Naive thymus-derived CD4-positive, alpha-beta T cell (primary cell): ENCODE measurements at regions of chr12 and their contacts with region 1.

Region 1: DNA sequence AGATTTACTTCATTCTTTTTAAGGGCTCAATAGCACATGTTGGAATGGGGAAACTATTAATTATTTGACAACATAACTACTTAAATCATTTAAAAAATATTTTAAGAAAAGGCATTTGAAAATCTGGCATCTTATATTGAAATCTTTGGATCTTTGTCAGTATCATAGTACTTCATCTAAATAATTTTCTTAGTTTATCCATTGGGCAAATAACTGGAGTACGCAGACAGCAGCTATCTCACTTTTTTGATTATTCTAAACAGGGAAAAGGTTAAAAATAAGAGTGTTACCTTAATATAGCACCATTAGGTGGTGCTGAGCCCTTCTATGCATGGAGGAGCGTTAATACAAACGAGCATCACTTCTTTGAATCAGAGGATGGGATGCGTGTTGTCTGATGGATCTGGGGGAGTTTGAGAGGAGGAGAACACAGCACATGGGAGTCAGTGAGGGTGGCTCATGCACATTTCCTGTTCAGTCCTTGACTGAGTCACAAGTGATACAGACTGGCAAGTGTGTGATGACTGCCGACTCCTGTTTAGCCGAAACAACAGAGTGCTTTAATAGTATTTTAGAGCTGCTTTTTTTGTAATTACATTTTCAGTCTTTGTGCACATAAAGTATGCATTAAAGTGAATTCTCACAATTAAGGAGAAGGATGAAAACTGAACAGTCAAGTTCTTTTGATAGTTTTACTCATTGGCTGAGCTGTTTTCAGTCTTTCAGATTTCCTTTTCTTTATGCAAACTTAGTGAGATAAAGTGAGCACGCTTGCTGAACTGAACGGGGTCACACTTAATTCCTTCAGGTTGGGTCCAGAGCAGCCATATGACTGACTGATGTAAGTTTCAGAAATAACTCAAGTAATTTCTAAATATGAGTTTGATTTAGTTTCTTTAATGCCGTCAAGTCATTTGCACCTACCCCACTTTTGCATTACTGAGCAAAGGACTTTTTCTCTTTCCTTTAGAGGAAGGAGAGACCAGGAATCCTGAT is 92.7 kb downstream of the DIP2B start:
- DNase-seq: peak in 8 of 9 donors; percentile 8 to 55 (median 33)
- ATAC-seq: peak; percentile 88
- H3K4me3 ChIP-seq: no peak overlapping the region
- H3K4me3 Mint-ChIP-seq: peak overlapping the region in 9 of 10 donors; percentile 26 to 76 (median 62)
- H3K27ac ChIP-seq: peak overlapping the region; percentile 36
- H3K27ac Mint-ChIP-seq: peak overlapping the region in 8 of 9 donors; percentile 16 to 80 (median 58)
- H3K4me1 ChIP-seq: peaks cover 0 to 7% of the 10 kb centered on the region in 2 donors
- H3K4me1 Mint-ChIP-seq: peaks cover 38 to 76% (median 58%) of the 10 kb centered on the region in 7 donors
- H3K27me3 ChIP-seq: no peaks in the 10 kb centered on the region
- H3K27me3 Mint-ChIP-seq: no peaks in the 10 kb centered on the region

Region 2: DNA sequence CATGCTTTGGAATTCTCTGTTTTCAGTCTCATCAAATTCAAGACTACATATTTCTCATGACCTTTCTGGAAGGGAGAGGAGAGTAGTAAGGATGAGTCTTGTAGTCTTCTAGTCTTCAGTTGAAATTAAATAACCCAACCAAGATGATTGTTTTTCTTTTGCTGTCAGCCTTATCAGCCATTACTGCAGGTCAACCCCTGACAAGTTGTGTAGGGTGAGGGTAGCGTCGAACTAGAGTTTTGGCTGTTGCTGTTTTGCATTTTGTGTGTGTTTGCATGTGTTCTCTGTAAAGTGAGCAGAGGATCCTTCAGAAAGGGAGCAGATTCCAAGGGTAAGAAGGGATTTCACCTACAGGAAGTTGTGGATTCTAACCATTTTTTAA is 64.3 kb before region 1 on chr12:
- CTCF ChIA-PET with region 1: no interaction called
- POLR2A ChIA-PET with region 1: no interaction called
- intact Hi-C with region 1: loop called in 1 of 2 experiments (anchors 5 kb)
- DNase-seq: no peak
- ATAC-seq: peak; percentile 6
- H3K4me3 ChIP-seq: no peak overlapping the region
- H3K4me3 Mint-ChIP-seq: no peak overlapping the region
- H3K27ac ChIP-seq: peak overlapping the region; percentile 50
- H3K27ac Mint-ChIP-seq: no peak overlapping the region
- H3K4me1 ChIP-seq: peaks cover 11 to 46% of the 10 kb centered on the region in 2 donors
- H3K4me1 Mint-ChIP-seq: peaks cover 23 to 39% (median 34%) of the 10 kb centered on the region in 7 donors
- H3K27me3 ChIP-seq: no peaks in the 10 kb centered on the region
- H3K27me3 Mint-ChIP-seq: no peaks in the 10 kb centered on the region

Region 3: DNA sequence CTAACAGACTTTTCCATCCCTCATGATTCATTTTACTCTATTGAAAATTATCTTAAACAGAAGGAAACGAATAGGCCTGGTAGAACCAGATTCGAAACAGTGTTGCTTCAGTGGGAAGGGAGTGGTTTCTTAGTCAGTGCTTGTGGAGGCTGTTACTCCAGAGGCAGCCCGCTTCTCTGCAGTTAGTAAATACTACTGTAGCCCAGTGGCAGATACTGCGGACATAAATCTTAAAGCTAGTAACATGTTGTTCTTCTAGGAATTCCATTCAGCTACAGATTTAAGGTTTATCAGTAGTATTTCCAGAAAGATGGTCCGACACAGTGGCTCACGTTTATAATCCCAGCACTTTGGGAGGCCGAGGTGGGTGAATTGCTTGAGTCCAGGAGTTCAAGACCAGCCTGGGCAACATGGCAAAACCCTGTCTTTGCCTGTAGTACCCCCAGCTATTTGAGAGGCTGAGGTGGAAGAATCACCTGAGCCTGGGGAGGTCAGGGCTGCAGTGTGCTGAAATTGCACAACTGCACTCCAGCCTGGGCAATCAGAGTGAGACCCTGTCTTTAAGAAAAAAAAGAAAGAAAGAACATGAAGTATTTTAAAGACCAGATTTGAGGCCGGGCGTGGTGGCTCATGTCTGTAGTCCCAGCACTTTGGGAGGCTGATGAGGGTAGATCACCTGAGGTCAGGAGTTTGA is 46.8 kb before region 1 on chr12:
- CTCF ChIA-PET with region 1: no interaction called
- POLR2A ChIA-PET with region 1: no interaction called
- intact Hi-C with region 1: loop called in 1 of 2 experiments (anchors 5 kb)
- DNase-seq: no peak
- ATAC-seq: no peak
- H3K4me3 ChIP-seq: no peak overlapping the region
- H3K4me3 Mint-ChIP-seq: no peak overlapping the region
- H3K27ac ChIP-seq: no peak overlapping the region
- H3K27ac Mint-ChIP-seq: peak overlapping the region in 1 of 9 donors; percentile 25
- H3K4me1 ChIP-seq: peaks cover 0 to 4% of the 10 kb centered on the region in 2 donors
- H3K4me1 Mint-ChIP-seq: peaks cover 19 to 70% (median 57%) of the 10 kb centered on the region in 7 donors
- H3K27me3 ChIP-seq: no peaks in the 10 kb centered on the region
- H3K27me3 Mint-ChIP-seq: no peaks in the 10 kb centered on the region

Region 4: GRCh38 chr12:50581201-50582184 is 16.0 kb before region 1 on chr12:
- CTCF ChIA-PET with region 1: interaction called, 4 read pairs
- POLR2A ChIA-PET with region 1: interaction called, 4 read pairs
- intact Hi-C with region 1: loop called in 1 of 2 experiments (anchors 2 kb)
- DNase-seq: no peak
- ATAC-seq: peak; percentile 12
- H3K4me3 ChIP-seq: no peak overlapping the region
- H3K4me3 Mint-ChIP-seq: peak overlapping the region in 1 of 10 donors; percentile 7
- H3K27ac ChIP-seq: no peak overlapping the region
- H3K27ac Mint-ChIP-seq: peak overlapping the region in 3 of 9 donors; percentile 22 to 59 (median 42)
- H3K4me1 ChIP-seq: peaks cover 0 to 8% of the 10 kb centered on the region in 2 donors
- H3K4me1 Mint-ChIP-seq: peaks cover 0 to 33% (median 16%) of the 10 kb centered on the region in 7 donors
- H3K27me3 ChIP-seq: no peaks in the 10 kb centered on the region
- H3K27me3 Mint-ChIP-seq: no peaks in the 10 kb centered on the region

Region 5: GRCh38 chr12:50637870-50638481 is 40.5 kb after region 1 on chr12:
- CTCF ChIA-PET with region 1: interaction called, 5 read pairs
- POLR2A ChIA-PET with region 1: no interaction called
- intact Hi-C with region 1: loop called in 1 of 2 experiments (anchors 1 kb)
- DNase-seq: peak in 7 of 9 donors; percentile 39 to 70 (median 53)
- ATAC-seq: peak; percentile 79
- H3K4me3 ChIP-seq: no peak overlapping the region
- H3K4me3 Mint-ChIP-seq: peak overlapping the region in 1 of 10 donors; percentile 2
- H3K27ac ChIP-seq: no peak overlapping the region
- H3K27ac Mint-ChIP-seq: peak overlapping the region in 8 of 9 donors; percentile 13 to 86 (median 55)
- H3K4me1 ChIP-seq: peaks cover 0 to 16% of the 10 kb centered on the region in 2 donors
- H3K4me1 Mint-ChIP-seq: peaks cover 34 to 72% (median 65%) of the 10 kb centered on the region in 7 donors
- H3K27me3 ChIP-seq: no peaks in the 10 kb centered on the region
- H3K27me3 Mint-ChIP-seq: no peaks in the 10 kb centered on the region